Activated B cell treated with CpG ODN at 0.5 μM for 24 hours (primary cell): ENCODE measurements at regions of chr6 and their contacts with region 1.

Region 1: DNA sequence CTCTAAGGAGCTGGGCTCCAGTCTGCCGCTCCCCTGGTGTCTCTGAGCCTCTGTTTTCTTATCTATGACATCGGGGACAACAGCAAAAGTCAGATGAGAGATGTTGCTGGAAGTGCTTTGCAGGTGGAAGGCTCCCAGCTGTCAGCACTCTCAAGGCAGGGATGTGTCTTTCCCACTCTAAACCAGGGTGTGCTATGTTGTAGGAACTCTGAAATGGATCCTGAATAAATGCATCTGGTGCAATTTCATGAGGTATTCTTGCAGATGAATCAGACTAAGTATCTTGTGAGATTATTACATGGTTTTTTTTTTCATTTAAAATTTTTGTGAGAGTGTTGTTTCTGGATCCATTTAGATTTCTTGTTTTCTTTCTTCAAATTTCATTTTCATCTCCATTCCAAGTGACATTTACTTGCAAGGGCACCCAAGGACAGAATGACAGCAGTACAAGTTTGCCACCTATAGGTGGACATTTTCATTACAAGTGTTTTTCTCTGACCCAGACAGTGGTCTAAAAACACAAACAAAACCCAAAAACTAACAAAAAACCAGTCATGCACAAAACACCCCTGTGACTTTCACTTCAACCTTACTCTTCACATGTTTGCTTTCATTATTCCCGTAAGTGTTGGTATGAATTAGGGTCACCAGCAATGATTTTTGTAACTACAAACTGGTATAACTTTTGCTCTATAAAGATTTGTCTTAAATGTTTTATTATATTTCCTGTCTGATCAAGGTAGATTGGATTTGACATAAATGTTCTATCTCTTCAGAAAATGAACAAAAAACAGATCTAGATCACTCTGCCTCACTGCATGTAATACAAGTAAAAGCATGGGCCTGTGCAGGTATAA is 14.7 kb upstream of the SIM1 start:
- DNase-seq: no peak
- ATAC-seq: no peak
- H3K4me3 Mint-ChIP-seq: no peak overlapping the region
- H3K27ac Mint-ChIP-seq: no peak overlapping the region
- H3K4me1 Mint-ChIP-seq: no peaks in the 10 kb centered on the region
- H3K27me3 Mint-ChIP-seq: peaks cover 8% of the 10 kb centered on the region
- CTCF ChIP-seq: no peak

Region 2: GRCh38 chr6:99330159-99330558 is 1149.2 kb before region 1 on chr6:
- CTCF ChIA-PET with region 1: no interaction called
- POLR2A ChIA-PET with region 1: no interaction called
- intact Hi-C with region 1: loop called (anchors 2 kb)
- DNase-seq: no peak
- ATAC-seq: peak; percentile 82
- H3K4me3 Mint-ChIP-seq: no peak overlapping the region
- H3K27ac Mint-ChIP-seq: no peak overlapping the region
- H3K4me1 Mint-ChIP-seq: peaks cover 14% of the 10 kb centered on the region
- H3K27me3 Mint-ChIP-seq: no peaks in the 10 kb centered on the region
- CTCF ChIP-seq: peak; percentile 71

Region 3: GRCh38 chr6:99868074-99868702 is 611.2 kb before region 1 on chr6:
- CTCF ChIA-PET with region 1: interaction called, 3 read pairs
- POLR2A ChIA-PET with region 1: no interaction called
- intact Hi-C with region 1: loop called (anchors 1 kb)
- DNase-seq: peak; percentile 33
- ATAC-seq: no peak
- H3K4me3 Mint-ChIP-seq: no peak overlapping the region
- H3K27ac Mint-ChIP-seq: no peak overlapping the region
- H3K4me1 Mint-ChIP-seq: peaks cover 2% of the 10 kb centered on the region
- H3K27me3 Mint-ChIP-seq: peaks cover 23% of the 10 kb centered on the region
- CTCF ChIP-seq: no peak

Region 4: GRCh38 chr6:100001915-100002388 is 477.5 kb before region 1 on chr6:
- CTCF ChIA-PET with region 1: no interaction called
- POLR2A ChIA-PET with region 1: no interaction called
- intact Hi-C with region 1: loop called (anchors 1 kb)
- DNase-seq: no peak
- ATAC-seq: peak; percentile 69
- H3K4me3 Mint-ChIP-seq: no peak overlapping the region
- H3K27ac Mint-ChIP-seq: no peak overlapping the region
- H3K4me1 Mint-ChIP-seq: no peaks in the 10 kb centered on the region
- H3K27me3 Mint-ChIP-seq: peaks cover 16% of the 10 kb centered on the region
- CTCF ChIP-seq: peak; percentile 67

Region 5: GRCh38 chr6:100176311-100176950 is 303.0 kb before region 1 on chr6:
- CTCF ChIA-PET with region 1: no interaction called
- POLR2A ChIA-PET with region 1: no interaction called
- intact Hi-C with region 1: loop called (anchors 1 kb)
- DNase-seq: no peak
- ATAC-seq: no peak
- H3K4me3 Mint-ChIP-seq: no peak overlapping the region
- H3K27ac Mint-ChIP-seq: no peak overlapping the region
- H3K4me1 Mint-ChIP-seq: no peaks in the 10 kb centered on the region
- H3K27me3 Mint-ChIP-seq: no peaks in the 10 kb centered on the region
- CTCF ChIP-seq: no peak